Spleen (tissue), 13 donors: ENCODE measurements at regions of chr1 and their contacts with region 1.

Region 1: GRCh38 chr1:66764994-66765578 is 12.8 kb downstream of the DYNLT5 start:
- DNase-seq: no peak
- H3K4me3 ChIP-seq: no peak overlapping the region
- H3K27ac ChIP-seq: no peak overlapping the region
- H3K4me1 ChIP-seq: peaks cover 0 to 6% (median 2%) of the 10 kb centered on the region in 6 donors
- H3K27me3 ChIP-seq: no peaks in the 10 kb centered on the region
- CTCF ChIP-seq: peak; percentile 52 to 76 (median 70)
- POLR2A ChIP-seq: no peak

Region 2: GRCh38 chr1:66732407-66733166 is 32.5 kb before region 1 on chr1:
- intact Hi-C with region 1: no loop called
- DNase-seq: no peak
- H3K4me3 ChIP-seq: no peak overlapping the region
- H3K27ac ChIP-seq: peak overlapping the region in 1 of 8 donors; percentile 61
- H3K4me1 ChIP-seq: peaks cover 0 to 10% (median 0%) of the 10 kb centered on the region in 6 donors
- H3K27me3 ChIP-seq: no peaks in the 10 kb centered on the region
- CTCF ChIP-seq: no peak
- POLR2A ChIP-seq: no peak

Region 3: DNA sequence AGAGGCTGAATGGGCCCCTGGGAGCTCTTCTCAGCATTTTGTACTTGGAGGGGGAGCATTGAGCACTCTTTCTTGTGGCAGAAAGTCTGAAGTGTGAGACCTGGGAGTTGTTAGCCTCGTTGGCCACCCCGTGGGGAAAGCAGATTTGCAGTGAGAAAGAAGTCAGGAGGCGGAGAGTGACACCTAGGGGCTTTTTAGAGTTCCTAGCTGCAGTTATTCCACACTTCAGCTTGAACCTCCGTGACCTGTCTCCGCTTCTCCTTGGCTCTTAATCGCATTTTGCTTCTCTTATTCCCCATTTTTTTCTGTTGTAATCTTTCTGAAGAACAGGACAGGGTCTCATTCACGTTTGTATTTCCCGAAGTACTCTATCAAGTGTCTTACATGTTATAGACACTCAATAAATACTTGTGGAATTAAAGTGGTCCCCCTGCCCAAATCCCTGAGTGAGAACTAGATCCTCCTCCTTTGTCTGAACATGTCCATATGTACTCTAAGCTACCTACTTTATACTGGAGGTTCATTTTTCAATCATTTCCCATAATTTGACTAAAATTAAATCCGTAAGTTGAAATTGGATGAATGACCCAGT is 384.2 kb after region 1 on chr1:
- intact Hi-C with region 1: loop called (anchors 5 kb)
- DNase-seq: peak; percentile 77
- H3K4me3 ChIP-seq: no peak overlapping the region
- H3K27ac ChIP-seq: no peak overlapping the region
- H3K4me1 ChIP-seq: peaks cover 0 to 12% (median 9%) of the 10 kb centered on the region in 6 donors
- H3K27me3 ChIP-seq: peaks cover 0 to 4% (median 0%) of the 10 kb centered on the region in 7 donors
- CTCF ChIP-seq: peak; percentile 36 to 75 (median 63)
- POLR2A ChIP-seq: no peak

Region 4: DNA sequence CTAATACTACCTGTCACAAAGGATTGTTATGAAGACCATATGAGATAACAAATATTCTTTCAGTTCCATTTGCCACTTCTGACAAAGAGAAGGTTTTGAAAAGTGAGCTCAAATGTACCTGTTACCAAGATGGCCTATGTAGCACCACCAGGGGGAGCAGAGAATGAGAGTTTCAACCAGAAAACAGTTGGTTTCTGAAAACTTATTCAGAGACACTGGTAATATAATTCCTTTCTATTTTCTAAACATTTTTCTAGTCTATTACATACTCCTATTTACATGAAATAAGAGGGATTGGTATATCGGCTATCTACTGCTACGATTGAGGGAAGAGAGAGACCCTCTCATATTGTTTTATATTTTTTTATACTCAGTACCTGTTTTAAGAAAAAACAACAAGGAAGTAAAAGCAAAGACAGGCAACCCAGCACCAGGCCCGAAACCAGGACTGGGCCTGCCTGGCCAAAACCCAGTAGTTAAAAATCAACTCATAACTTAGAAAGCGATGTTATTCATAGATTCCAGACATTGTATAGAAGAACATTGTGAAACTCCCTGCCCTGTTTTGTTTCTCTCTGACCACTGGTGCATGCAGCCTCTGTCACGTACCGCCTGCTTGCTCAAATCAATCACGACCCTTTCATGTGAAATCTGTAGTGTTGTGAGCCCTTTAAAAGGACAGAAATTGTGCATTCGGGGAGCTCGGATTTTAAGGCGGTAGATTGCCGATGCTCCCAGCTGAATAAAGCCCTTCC is 449.5 kb after region 1 on chr1:
- intact Hi-C with region 1: loop called (anchors 5 kb)
- DNase-seq: no peak
- H3K4me3 ChIP-seq: no peak overlapping the region
- H3K27ac ChIP-seq: no peak overlapping the region
- H3K4me1 ChIP-seq: no peaks in the 10 kb centered on the region
- H3K27me3 ChIP-seq: no peaks in the 10 kb centered on the region
- CTCF ChIP-seq: peak in 10 of 11 experiments; percentile 8 to 59 (median 43)
- POLR2A ChIP-seq: no peak

Region 5: DNA sequence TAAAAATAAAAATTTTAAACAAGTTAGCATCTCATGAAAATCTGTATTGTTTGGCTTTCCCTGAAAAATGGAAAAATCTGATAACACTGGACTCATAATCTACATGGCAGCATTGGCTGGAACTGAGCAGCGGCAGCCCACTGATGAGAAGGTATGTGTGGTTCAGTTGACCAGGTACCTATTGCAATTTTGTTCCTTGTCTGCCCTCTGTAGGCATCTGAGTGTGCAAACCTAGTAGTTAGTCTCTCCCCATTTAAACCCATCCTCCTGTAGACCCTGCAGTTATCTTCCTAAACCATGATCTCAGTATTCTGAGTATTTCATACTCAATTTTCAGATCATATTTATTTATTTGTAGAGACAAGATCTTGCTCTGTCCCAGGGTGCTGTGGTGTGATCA is 724.6 kb after region 1 on chr1:
- intact Hi-C with region 1: loop called (anchors 10 kb)
- DNase-seq: no peak
- H3K4me3 ChIP-seq: no peak overlapping the region
- H3K27ac ChIP-seq: no peak overlapping the region
- H3K4me1 ChIP-seq: no peaks in the 10 kb centered on the region
- H3K27me3 ChIP-seq: no peaks in the 10 kb centered on the region
- CTCF ChIP-seq: peak in 1 of 11 experiments; percentile 37
- POLR2A ChIP-seq: no peak